ENCODE measurements at regions of chr10 and their contacts with region 1.

Region 1: DNA sequence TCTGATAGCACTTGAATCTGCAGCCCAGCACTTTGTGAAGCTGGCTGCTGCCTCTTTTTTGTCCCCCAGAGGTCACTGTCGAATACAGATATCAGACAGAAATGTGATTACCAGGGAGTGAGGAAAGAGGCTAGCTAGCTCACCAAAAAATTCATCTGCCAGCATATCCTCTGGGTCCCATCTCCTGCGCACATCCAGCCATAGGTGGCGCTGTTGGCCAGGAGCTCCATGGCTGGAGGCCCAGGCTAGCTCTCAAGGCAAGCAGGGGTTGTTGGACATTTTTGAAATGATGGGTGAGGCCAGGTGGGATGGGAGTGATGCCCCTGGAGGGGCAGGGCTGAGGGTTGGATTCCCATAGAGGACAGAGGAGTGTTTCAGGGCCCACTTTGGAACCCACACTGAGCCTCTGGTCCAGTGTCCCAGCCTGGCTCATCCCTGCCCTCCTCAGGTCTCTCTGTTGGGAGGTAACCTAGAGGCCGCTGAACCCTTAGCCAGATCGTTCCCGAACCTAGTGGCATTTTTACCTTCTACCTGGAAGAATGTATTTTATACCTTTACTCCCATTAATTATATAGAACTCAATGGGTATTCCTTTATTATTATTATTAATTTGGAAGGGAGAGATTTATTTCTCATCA is 14.8 kb downstream of the DPCD start:
- DNase-seq: peak; percentile 84
- CTCF ChIP-seq: peak; percentile 96

Region 2: GRCh38 chr10:100962351-100963080 is 640.4 kb before region 1 on chr10:
- CTCF ChIA-PET with region 1: no interaction called
- POLR2A ChIA-PET with region 1: no interaction called
- DNase-seq: no peak
- CTCF ChIP-seq: no peak

Region 3: GRCh38 chr10:101587725-101588653 is 14.9 kb before region 1 on chr10 and contains the starts of genes DPCD and POLL:
- CTCF ChIA-PET with region 1: interaction called, 45 read pairs
- POLR2A ChIA-PET with region 1: no interaction called
- DNase-seq: peak; percentile 98
- CTCF ChIP-seq: no peak

Region 4: GRCh38 chr10:101617102-101617823 is 14.4 kb after region 1 on chr10:
- CTCF ChIA-PET with region 1: interaction called, 26 read pairs
- POLR2A ChIA-PET with region 1: no interaction called
- DNase-seq: peak; percentile 75
- CTCF ChIP-seq: peak; percentile 14

Region 5: GRCh38 chr10:101774589-101775272 is 171.9 kb after region 1 on chr10:
- CTCF ChIA-PET with region 1: interaction called, 331 read pairs
- POLR2A ChIA-PET with region 1: interaction called, 3 read pairs
- DNase-seq: peak; percentile 33
- CTCF ChIP-seq: no peak

Measured in GM10248 (cell line).